ENCODE measurements at regions of chr3 and their contacts with region 1.

Region 1: GRCh38 chr3:55597638-55598037 is 110.5 kb upstream of the WNT5A start:
- DNase-seq: peak; percentile 67 to 99
- H3K4me3 ChIP-seq: peak overlapping the region; percentile 63; the same call in 1 of the 2 replicates
- H3K27ac ChIP-seq: peak overlapping the region; percentile 99
- H3K4me1 ChIP-seq: peaks cover 68% of the 10 kb centered on the region
- H3K27me3 ChIP-seq: no peaks in the 10 kb centered on the region
- CTCF ChIP-seq: no peak

Region 2: DNA sequence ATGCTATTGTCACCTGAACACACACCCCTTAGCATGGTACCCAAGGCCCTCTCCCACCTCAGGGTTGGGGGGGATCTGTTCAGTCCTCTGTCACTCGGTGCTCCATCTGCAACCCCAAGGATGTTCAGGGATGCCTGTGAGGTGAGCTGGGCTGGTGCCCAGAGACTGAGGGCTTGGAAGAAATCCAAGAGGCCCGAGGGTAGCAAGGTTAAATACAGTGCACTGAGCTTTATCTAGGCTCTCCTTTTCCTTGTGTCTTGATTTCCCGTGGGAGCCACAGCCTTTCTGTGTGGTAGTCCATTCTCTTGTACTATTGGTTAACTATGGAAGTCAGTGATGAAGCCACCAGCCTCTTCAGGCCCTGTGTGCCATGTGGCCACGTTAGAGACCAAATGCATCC is 91.9 kb before region 1 on chr3:
- CTCF ChIA-PET with region 1: no interaction called
- POLR2A ChIA-PET with region 1: interaction called, 6 read pairs
- intact Hi-C with region 1: loop called (anchors 1 kb)
- DNase-seq: peak; percentile 44 to 66
- H3K4me3 ChIP-seq: no peak overlapping the region
- H3K27ac ChIP-seq: peak overlapping the region; percentile 29; the same call in 1 of the 2 replicates
- H3K4me1 ChIP-seq: no peaks in the 10 kb centered on the region
- H3K27me3 ChIP-seq: no peaks in the 10 kb centered on the region
- CTCF ChIP-seq: no peak

Region 3: GRCh38 chr3:55620351-55621025 is 22.9 kb after region 1 on chr3:
- CTCF ChIA-PET with region 1: no interaction called
- POLR2A ChIA-PET with region 1: interaction called, 8 read pairs
- intact Hi-C with region 1: loop called (anchors 1 kb)
- DNase-seq: peak; percentile 79 to 95
- H3K4me3 ChIP-seq: peak overlapping the region; percentile 21; the same call in 1 of the 2 replicates
- H3K27ac ChIP-seq: peak overlapping the region; percentile 100
- H3K4me1 ChIP-seq: peaks cover 82% of the 10 kb centered on the region
- H3K27me3 ChIP-seq: no peaks in the 10 kb centered on the region
- CTCF ChIP-seq: no peak